H1 (cell line): ENCODE measurements at regions of chr10 and their contacts with region 1.

Region 1: DNA sequence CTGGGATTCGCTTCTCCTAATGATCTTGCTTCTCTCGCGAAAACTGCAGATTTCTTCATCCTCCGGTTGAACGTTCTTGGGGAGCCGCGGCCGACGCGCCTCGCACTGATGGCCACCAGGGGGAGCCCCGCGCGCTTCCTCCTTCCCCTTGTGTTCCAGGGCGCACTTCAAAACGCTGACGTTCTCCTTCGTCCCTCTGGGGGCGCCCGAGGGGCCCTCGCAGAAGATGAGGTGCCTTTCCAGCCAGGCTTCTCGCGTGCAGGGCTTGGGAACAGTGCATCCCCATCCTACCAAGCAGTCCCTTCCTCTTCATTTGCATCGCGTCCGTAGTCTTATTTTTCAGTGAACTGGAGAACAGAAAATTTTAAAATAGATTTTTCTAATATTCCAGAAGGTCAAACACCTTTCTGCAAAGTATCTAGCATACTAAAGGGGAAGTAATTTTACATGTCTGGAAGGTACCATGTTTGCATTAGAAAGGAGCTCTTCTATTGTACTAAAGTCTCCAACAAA is 22.5 kb downstream of the GSTO2 start:
- DNase-seq: peak; percentile 62 to 95
- H3K4me3 ChIP-seq: peak overlapping the region in 3 of 4 experiments; percentile 4 to 31 (median 23); a peak in 3 of 8 replicates
- H3K27ac ChIP-seq: no peak overlapping the region
- H3K4me1 ChIP-seq: peaks cover 0 to 3% (median 2%) of the 10 kb centered on the region in 4 experiments; a peak in 3 of 7 replicates
- H3K27me3 ChIP-seq: no peaks in the 10 kb centered on the region
- CTCF ChIP-seq: peak; percentile 99 to 100 (median 99)
- EP300 ChIP-seq: no peak
- POLR2A ChIP-seq: no peak
- RAD21 ChIP-seq: peak; percentile 79 to 86

Region 2: GRCh38 chr10:104254493-104255310 is 36.8 kb before region 1 on chr10 and contains the start of gene GSTO1:
- CTCF ChIA-PET with region 1: interaction called, 12 read pairs
- POLR2A ChIA-PET with region 1: no interaction called
- DNase-seq: peak in 1 of 2 experiments; percentile 67
- H3K4me3 ChIP-seq: peak within 1 kb of the TSS; percentile 70 to 76 (median 73)
- H3K27ac ChIP-seq: no peak within 1 kb of the TSS
- H3K4me1 ChIP-seq: peaks cover 5 to 22% (median 18%) of the 10 kb centered on the region in 4 experiments
- H3K27me3 ChIP-seq: peaks cover 0 to 9% (median 5%) of the 10 kb centered on the region in 4 experiments; a peak in 5 of 7 replicates
- CTCF ChIP-seq: no peak
- EP300 ChIP-seq: no peak
- POLR2A ChIP-seq: no peak
- RAD21 ChIP-seq: no peak
- total RNA-seq, gene GSTO1: 32.5 and 33.8 TPM in 2 replicates

Region 3: DNA sequence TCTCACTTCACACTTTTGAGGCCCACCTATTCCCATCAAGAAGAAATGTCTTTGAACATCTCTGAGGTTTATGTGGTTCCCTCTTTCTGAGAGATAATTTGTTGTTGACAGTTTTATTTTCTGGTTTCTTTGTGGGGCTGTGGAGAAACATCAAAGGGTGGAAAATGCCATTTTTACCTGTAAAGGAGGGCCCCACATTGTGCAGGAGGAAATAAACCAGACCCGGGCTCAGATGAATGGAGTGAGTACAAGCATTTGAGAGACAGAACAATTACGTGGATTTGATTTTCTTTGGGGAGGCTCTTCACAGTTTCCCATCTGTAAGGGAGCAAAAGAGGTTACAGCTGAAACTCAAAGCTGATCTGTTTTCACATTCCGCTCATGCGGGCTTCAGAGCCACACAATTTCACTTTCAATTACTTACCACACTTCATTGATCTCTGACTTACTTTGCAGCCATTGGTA is 17.0 kb after region 1 on chr10:
- CTCF ChIA-PET with region 1: interaction called, 331 read pairs
- POLR2A ChIA-PET with region 1: interaction called, 6 read pairs
- DNase-seq: no peak
- H3K4me3 ChIP-seq: no peak overlapping the region
- H3K27ac ChIP-seq: no peak overlapping the region
- H3K4me1 ChIP-seq: peaks cover 0 to 7% (median 3%) of the 10 kb centered on the region in 4 experiments; a peak in 3 of 7 replicates
- H3K27me3 ChIP-seq: no peaks in the 10 kb centered on the region
- CTCF ChIP-seq: no peak
- EP300 ChIP-seq: no peak
- POLR2A ChIP-seq: no peak
- RAD21 ChIP-seq: no peak

Region 4: GRCh38 chr10:104322416-104322782 is 30.9 kb after region 1 on chr10:
- CTCF ChIA-PET with region 1: interaction called, 331 read pairs
- POLR2A ChIA-PET with region 1: interaction called, 4 read pairs
- DNase-seq: no peak
- H3K4me3 ChIP-seq: peak overlapping the region in 1 of 4 experiments; percentile 14; a peak in 1 of 8 replicates
- H3K27ac ChIP-seq: no peak overlapping the region
- H3K4me1 ChIP-seq: peaks cover 15 to 56% (median 41%) of the 10 kb centered on the region in 4 experiments
- H3K27me3 ChIP-seq: no peaks in the 10 kb centered on the region
- CTCF ChIP-seq: no peak
- EP300 ChIP-seq: no peak
- POLR2A ChIP-seq: no peak
- RAD21 ChIP-seq: no peak

Region 5: GRCh38 chr10:104328896-104329710 is 37.6 kb after region 1 on chr10:
- CTCF ChIA-PET with region 1: interaction called, 67 read pairs
- POLR2A ChIA-PET with region 1: no interaction called
- DNase-seq: no peak
- H3K4me3 ChIP-seq: peak overlapping the region in 3 of 4 experiments; percentile 17 to 44 (median 24); a peak in 5 of 8 replicates
- H3K27ac ChIP-seq: peak overlapping the region; percentile 87
- H3K4me1 ChIP-seq: peaks cover 48 to 77% (median 58%) of the 10 kb centered on the region in 4 experiments
- H3K27me3 ChIP-seq: no peaks in the 10 kb centered on the region
- CTCF ChIP-seq: no peak
- EP300 ChIP-seq: no peak
- POLR2A ChIP-seq: no peak
- RAD21 ChIP-seq: no peak

Region 6: DNA sequence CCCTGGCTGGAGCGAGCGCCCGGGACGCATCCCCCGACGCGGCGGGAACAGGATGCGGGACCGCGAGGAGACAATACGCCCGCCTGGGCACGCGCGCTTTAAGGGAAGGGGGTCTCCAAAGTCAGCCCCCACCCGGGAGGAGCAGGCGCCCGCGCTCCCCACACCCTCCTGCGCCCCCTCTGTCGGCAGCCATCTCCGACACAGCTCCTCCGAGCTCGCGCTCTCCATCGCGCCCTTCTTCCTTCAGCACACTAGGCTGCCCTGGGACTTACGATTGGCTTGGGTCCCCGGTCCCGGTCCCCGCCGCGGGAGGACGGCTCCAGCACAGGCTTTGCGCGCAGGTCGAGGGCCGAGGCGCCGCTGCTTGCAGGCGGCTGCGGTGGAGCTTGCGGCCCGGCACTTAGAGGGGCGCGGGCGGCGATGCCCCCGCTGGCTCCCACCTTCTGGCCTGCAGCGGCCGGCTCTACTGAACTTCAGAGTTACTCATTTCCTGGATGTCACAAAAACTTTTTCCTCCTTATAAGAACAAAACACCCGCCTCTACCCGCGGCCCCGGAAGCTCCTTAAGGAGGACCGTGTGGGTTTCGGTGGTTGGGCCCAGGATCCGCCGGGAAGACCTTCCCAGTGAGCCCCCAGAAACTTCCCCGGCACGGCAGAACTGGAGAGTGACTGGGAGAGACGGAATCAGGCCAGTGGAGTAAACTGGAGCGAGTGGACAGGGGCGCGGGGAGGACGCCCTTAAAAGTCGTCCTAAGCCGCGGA is 46.7 kb after region 1 on chr10 and contains the start of gene ITPRIP:
- CTCF ChIA-PET with region 1: interaction called, 379 read pairs
- POLR2A ChIA-PET with region 1: interaction called, 6 read pairs
- DNase-seq: peak in 1 of 2 experiments; percentile 82
- H3K4me3 ChIP-seq: peak within 1 kb of the TSS; percentile 73 to 90 (median 80)
- H3K27ac ChIP-seq: peak within 1 kb of the TSS; percentile 87
- H3K4me1 ChIP-seq: peaks cover 18 to 32% (median 23%) of the 10 kb centered on the region in 4 experiments
- H3K27me3 ChIP-seq: peaks cover 0 to 2% (median 0%) of the 10 kb centered on the region in 4 experiments; a peak in 1 of 7 replicates
- CTCF ChIP-seq: peak in 2 of 3 experiments; percentile 21 to 32; a peak in 2 of 4 replicates
- EP300 ChIP-seq: no peak
- POLR2A ChIP-seq: peak in 1 of 2 experiments; percentile 79; a peak in 2 of 3 replicates
- RAD21 ChIP-seq: no peak
- total RNA-seq, gene ITPRIP: 16.9 and 17.1 TPM in 2 replicates

Region 7: DNA sequence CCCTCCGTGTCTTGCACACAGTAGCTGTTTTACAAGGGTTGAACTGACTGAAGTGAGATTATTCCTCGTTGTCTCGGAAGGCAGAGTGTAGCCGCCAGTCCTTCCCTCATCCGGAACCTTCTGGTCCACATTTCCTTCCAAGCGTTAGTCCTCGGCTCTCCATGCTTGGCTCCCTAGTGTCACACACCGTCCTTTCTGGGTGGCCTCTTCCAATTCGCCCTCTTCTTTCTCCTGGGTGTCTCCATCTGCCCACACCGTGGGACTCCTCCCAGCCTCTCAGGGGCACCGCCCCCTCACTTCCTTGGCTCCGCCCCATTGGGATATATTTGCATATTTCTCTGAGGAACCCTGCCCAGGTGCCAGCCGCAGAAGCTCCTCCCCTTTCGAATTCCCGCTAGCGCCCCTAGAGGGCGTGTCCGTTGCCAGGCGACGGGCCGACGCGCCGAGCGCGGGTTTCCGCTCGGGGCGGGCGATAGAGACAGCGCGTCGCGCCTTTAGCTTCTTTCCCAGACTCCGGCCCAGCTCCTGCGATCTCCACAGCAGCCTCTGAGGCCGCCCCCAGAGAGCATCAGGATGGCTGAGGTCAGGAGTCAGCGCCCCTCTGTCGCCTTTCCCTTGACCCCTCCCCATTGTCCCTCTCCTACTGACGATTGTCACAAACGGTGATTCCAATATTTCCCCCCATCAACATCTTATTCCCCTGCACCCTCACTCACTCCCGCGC is 62.0 kb after region 1 on chr10 and contains the start of gene CFAP58:
- CTCF ChIA-PET with region 1: interaction called, 379 read pairs
- POLR2A ChIA-PET with region 1: interaction called, 4 read pairs
- DNase-seq: peak; percentile 79 to 98
- H3K4me3 ChIP-seq: peak within 1 kb of the TSS; percentile 35 to 71 (median 52); a peak in 7 of 8 replicates
- H3K27ac ChIP-seq: no peak within 1 kb of the TSS
- H3K4me1 ChIP-seq: peaks cover 0 to 9% (median 1%) of the 10 kb centered on the region in 4 experiments; a peak in 2 of 7 replicates
- H3K27me3 ChIP-seq: peaks cover 5 to 13% (median 10%) of the 10 kb centered on the region in 4 experiments
- CTCF ChIP-seq: peak; percentile 67 to 80 (median 69)
- EP300 ChIP-seq: no peak
- POLR2A ChIP-seq: no peak
- RAD21 ChIP-seq: peak; percentile 12 to 27; a peak in 2 of 4 replicates
- total RNA-seq, gene CFAP58: 0.71 and 1.1 TPM in 2 replicates